Sigmoid colon (tissue), 7 donors: ENCODE measurements at regions of chr10 and their contacts with region 1.

Region 1: GRCh38 chr10:12710594-12711349 is 290.7 kb downstream of the CCDC3 start:
- DNase-seq: peak; percentile 88
- H3K4me3 ChIP-seq: no peak overlapping the region
- H3K27ac ChIP-seq: peak overlapping the region; percentile 81 to 90 (median 86)
- H3K4me1 ChIP-seq: peaks cover 0 to 57% (median 51%) of the 10 kb centered on the region in 4 donors
- H3K27me3 ChIP-seq: no peaks in the 10 kb centered on the region
- CTCF ChIP-seq: peak; percentile 89 to 96 (median 90)
- EP300 ChIP-seq: no peak
- POLR2A ChIP-seq: no peak

Region 2: GRCh38 chr10:12348870-12349628 is 361.7 kb before region 1 on chr10 and contains the start of gene CAMK1D:
- intact Hi-C with region 1: loop called (anchors 5 kb)
- DNase-seq: peak; percentile 94
- H3K4me3 ChIP-seq: peak within 1 kb of the TSS; percentile 85 to 96 (median 90)
- H3K27ac ChIP-seq: peak within 1 kb of the TSS; percentile 93 to 97 (median 95)
- H3K4me1 ChIP-seq: peaks cover 0 to 22% (median 16%) of the 10 kb centered on the region in 4 donors
- H3K27me3 ChIP-seq: no peaks in the 10 kb centered on the region
- CTCF ChIP-seq: peak in 1 of 4 experiments; percentile 41
- EP300 ChIP-seq: no peak
- POLR2A ChIP-seq: peak in 1 of 2 donors; percentile 24
- total RNA-seq, gene CAMK1D: 7.2 to 10.2 (median 8.7) TPM

Region 3: GRCh38 chr10:12448729-12449391 is 261.9 kb before region 1 on chr10:
- intact Hi-C with region 1: loop called (anchors 5 kb)
- DNase-seq: no peak
- H3K4me3 ChIP-seq: no peak overlapping the region
- H3K27ac ChIP-seq: peak overlapping the region in 2 of 4 donors; percentile 70 to 84
- H3K4me1 ChIP-seq: peaks cover 0 to 41% (median 29%) of the 10 kb centered on the region in 4 donors
- H3K27me3 ChIP-seq: no peaks in the 10 kb centered on the region
- CTCF ChIP-seq: no peak
- EP300 ChIP-seq: no peak
- POLR2A ChIP-seq: no peak

Region 4: DNA sequence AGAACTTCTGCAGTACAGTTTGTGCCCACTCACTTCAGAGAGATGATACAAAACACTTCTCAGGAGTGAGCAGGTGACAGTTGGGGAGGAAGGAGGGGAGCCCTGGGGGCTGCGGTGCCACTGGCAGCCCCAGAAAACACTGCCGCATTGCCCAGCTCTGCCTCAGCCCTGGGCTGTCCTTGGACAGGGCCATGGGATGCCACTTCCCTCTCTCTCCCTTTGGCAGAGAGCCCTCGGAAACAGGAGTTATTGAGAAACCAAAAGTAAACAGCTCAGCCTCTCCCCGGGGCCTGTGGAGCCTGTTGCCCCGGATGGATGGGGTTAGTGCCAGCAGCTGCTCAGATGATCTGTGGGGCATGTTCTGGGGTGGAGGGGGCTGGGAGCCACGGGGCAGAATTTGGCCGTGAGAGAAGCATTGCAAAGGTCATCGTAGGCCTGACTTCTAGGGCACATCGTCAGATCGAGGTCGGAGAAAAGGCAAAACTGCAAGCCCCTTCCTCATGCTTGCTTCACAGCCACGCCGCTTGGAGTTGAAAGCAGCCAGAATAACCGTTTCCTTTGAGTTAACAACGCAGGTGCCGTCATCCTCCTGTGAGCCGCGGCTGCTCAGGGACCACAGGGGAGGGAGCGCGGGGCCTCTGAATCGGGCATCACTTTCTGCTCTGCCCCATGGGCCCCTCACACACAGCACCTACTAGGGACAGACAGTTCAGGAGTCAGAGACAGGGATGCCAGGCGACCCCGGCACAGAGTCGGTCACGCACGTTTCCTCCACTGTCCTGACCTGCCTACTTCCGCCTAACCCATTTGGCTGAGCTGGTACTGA is 105.0 kb before region 1 on chr10:
- intact Hi-C with region 1: loop called (anchors 5 kb)
- DNase-seq: peak; percentile 95
- H3K4me3 ChIP-seq: peak overlapping the region; percentile 20 to 46 (median 40)
- H3K27ac ChIP-seq: peak overlapping the region; percentile 83 to 86 (median 85)
- H3K4me1 ChIP-seq: peaks cover 0 to 47% (median 27%) of the 10 kb centered on the region in 4 donors
- H3K27me3 ChIP-seq: no peaks in the 10 kb centered on the region
- CTCF ChIP-seq: no peak
- EP300 ChIP-seq: peak in 1 of 4 donors; percentile 39
- POLR2A ChIP-seq: no peak

Region 5: GRCh38 chr10:12656518-12657142 is 54.1 kb before region 1 on chr10:
- intact Hi-C with region 1: loop called (anchors 2 kb)
- DNase-seq: no peak
- H3K4me3 ChIP-seq: no peak overlapping the region
- H3K27ac ChIP-seq: no peak overlapping the region
- H3K4me1 ChIP-seq: no peaks in the 10 kb centered on the region
- H3K27me3 ChIP-seq: no peaks in the 10 kb centered on the region
- CTCF ChIP-seq: peak; percentile 40 to 70 (median 54)
- EP300 ChIP-seq: no peak
- POLR2A ChIP-seq: no peak

Region 6: GRCh38 chr10:12849319-12850181 is 138.8 kb after region 1 on chr10:
- intact Hi-C with region 1: no loop called
- DNase-seq: no peak
- H3K4me3 ChIP-seq: no peak overlapping the region
- H3K27ac ChIP-seq: peak overlapping the region in 1 of 4 donors; percentile 20
- H3K4me1 ChIP-seq: peaks cover 0 to 28% (median 21%) of the 10 kb centered on the region in 4 donors
- H3K27me3 ChIP-seq: no peaks in the 10 kb centered on the region
- CTCF ChIP-seq: no peak
- EP300 ChIP-seq: no peak
- POLR2A ChIP-seq: no peak